K562 (cell line): ENCODE measurements at regions of chr5 and their contacts with region 1.

Region 1: DNA sequence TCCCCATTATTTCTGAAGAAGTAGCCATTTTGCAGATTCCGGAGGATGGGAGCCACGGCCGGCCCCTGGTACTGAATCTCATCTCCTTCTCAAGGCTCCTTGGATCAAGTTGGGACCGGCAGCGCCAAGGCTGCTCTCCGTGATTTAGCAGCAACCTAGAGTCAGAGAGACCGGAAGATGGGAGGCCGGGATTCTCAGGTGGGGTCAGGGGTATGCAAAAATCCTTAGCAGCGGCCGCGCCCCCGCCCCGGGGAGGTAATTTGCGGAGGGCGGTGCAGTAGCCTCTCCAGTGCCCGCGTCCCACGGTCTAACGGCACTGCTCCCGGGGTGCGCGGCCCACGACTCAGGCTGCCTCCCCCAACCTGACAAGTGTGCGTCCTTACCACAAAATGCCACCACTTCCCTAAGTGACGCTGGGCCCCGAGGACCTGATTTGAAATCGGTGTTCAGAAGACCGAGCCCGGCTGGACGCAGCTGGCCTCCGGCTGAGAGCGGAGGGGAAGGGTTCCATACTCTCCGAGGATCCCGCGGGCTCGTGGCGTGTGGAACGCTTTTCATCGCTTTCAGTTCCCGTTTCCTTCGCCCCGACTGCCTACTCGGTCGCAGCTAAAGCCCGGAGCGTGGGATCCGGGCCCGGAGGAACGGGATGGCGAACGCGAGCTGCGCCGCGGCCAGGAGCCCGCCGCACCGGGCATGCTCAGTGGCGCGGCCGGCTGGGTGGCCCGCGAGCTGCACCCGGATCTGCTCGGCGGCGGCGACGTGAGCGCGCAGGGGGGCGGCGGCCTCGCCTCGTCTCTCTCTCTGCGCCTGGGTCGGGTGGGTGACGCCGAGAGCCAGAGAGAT is at the start of gene SCAMP1:
- DNase-seq: peak; percentile 92 to 94 (median 93)
- ATAC-seq: peak; percentile 96
- H3K4me3 ChIP-seq: peak within 1 kb of the TSS; percentile 86
- H3K27ac ChIP-seq: peak within 1 kb of the TSS; percentile 88
- H3K4me1 ChIP-seq: peaks cover 10 to 19% of the 10 kb centered on the region in 2 experiments; a peak in 4 of 5 replicates
- H3K27me3 ChIP-seq: no peaks in the 10 kb centered on the region
- CTCF ChIP-seq: peak; percentile 26 to 58 (median 38); a peak in 3 of 6 replicates
- EP300 ChIP-seq: peak; percentile 42; the same call in 1 of the 2 replicates
- POLR2A ChIP-seq: peak; percentile 93
- RAD21 ChIP-seq: no peak
- polyA plus RNA-seq, gene SCAMP1: 13.2 to 13.6 TPM

Region 2: GRCh38 chr5:78294248-78295034 is 65.6 kb before region 1 on chr5 and contains the start of gene AP3B1:
- CTCF ChIA-PET with region 1: interaction called, 3 read pairs
- POLR2A ChIA-PET with region 1: interaction called, 14 read pairs
- in situ Hi-C with region 1: loop called (anchors 5 kb)
- intact Hi-C with region 1: loop called (anchors 1 kb)
- DNase-seq: peak; percentile 97 to 99 (median 98)
- ATAC-seq: peak; percentile 92
- H3K4me3 ChIP-seq: peak within 1 kb of the TSS; percentile 91
- H3K27ac ChIP-seq: peak within 1 kb of the TSS; percentile 92
- H3K4me1 ChIP-seq: peaks cover 5 to 10% of the 10 kb centered on the region in 2 experiments; a peak in 4 of 5 replicates
- H3K27me3 ChIP-seq: no peaks in the 10 kb centered on the region
- CTCF ChIP-seq: 0 out of 6 replicates have a peak, but pooled peaks of 1 of the 3 experiments have one; percentile 13
- EP300 ChIP-seq: peak; percentile 54; the same call in 1 of the 2 replicates
- POLR2A ChIP-seq: peak; percentile 89
- RAD21 ChIP-seq: peak in 1 of 2 experiments; percentile 17; a peak in 1 of 4 replicates
- polyA plus RNA-seq, gene AP3B1: 21.1 to 30.9 TPM

Region 3: DNA sequence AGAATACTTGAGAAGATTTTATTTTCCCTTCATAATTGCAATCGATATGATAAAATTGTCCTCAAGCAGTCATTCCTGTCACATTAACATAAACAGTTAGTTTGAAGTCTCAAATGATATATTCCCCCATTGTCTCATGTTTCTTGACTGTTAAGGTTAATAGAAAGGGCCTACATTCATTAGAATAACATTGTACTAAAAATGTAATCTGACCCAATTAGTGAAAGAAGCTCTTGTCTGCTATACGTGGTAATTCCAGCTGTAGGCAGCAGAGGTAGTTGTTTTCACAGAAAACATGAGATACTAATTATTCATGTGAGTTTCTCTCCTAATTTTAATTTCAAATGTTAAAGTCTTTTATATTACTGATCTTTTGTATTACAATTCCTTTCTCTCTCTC is 39.7 kb before region 1 on chr5:
- CTCF ChIA-PET with region 1: no interaction called
- POLR2A ChIA-PET with region 1: interaction called, 3 read pairs
- in situ Hi-C with region 1: no loop called
- intact Hi-C with region 1: loop called (anchors 5 kb)
- DNase-seq: peak in 2 of 4 experiments; percentile 25 to 42
- ATAC-seq: peak; percentile 67; the same call in 2 of the 3 replicates
- H3K4me3 ChIP-seq: no peak overlapping the region
- H3K27ac ChIP-seq: no peak overlapping the region
- H3K4me1 ChIP-seq: no peaks in the 10 kb centered on the region
- H3K27me3 ChIP-seq: no peaks in the 10 kb centered on the region
- CTCF ChIP-seq: peak; percentile 42 to 79 (median 45); a peak in 4 of 6 replicates
- EP300 ChIP-seq: no peak
- POLR2A ChIP-seq: no peak
- RAD21 ChIP-seq: peak; percentile 70 to 88

Region 4: DNA sequence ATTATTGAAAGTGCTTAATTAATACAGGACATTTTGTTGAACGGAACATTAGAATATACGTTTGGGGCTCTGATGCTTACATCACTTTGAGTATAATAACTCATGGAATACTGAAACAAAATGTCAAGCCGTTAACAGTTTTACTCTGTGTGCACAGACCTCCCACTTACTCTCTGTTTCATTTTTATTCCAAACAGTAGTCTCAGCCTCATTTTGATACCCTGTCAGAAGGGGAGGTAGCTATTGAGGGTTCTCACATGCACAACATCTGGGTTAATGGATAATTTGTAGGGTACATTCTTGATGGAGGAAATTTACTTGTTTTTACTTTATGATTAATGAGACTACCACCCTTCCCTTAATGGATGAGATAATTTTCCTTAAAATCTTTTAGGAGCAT is 59.3 kb after region 1 on chr5:
- CTCF ChIA-PET with region 1: no interaction called
- POLR2A ChIA-PET with region 1: no interaction called
- in situ Hi-C with region 1: no loop called
- intact Hi-C with region 1: no loop called
- DNase-seq: no peak
- ATAC-seq: no peak
- H3K4me3 ChIP-seq: no peak overlapping the region
- H3K27ac ChIP-seq: no peak overlapping the region
- H3K4me1 ChIP-seq: no peaks in the 10 kb centered on the region
- H3K27me3 ChIP-seq: no peaks in the 10 kb centered on the region
- CTCF ChIP-seq: no peak
- EP300 ChIP-seq: no peak
- POLR2A ChIP-seq: no peak
- RAD21 ChIP-seq: no peak